Gastrocnemius medialis (tissue), 4 donors: ENCODE measurements at regions of chr5 and their contacts with region 1.

Region 1: DNA sequence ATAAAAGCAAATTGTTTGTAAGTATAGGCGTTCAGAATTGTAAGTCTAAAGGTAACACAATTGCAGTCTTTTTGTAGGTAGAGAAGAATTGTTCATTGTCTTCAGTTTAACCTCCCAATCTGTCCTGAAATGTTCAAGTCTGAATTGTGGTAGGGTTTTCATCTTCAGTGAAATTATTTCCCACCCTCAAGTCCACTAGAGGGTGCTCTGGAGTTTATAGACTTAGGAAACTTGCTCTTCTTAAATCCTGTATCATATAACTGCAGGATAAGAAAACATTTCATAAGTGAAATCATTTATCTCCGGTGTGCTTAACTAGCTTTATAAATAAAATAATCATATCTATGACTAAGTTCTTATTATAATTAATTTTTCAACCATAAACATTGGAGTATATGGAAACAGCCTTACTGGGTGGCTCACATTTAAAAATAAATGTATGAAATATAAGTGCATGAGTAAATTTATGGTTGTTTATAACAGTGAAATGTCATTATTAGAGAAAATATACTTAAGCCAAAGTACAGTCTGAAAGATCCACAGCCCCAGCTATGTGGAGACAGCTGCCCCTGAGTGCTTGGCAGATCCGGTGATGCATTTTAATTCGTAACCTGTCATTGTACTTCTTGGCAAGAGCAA is 182.4 kb upstream of the OTULINL start:
- DNase-seq: no peak
- ATAC-seq: peak; percentile 40 to 73
- H3K4me3 ChIP-seq: no peak overlapping the region
- H3K27ac ChIP-seq: peak overlapping the region in 1 of 4 donors; percentile 26
- H3K4me1 ChIP-seq: peaks cover 0 to 11% of the 10 kb centered on the region in 2 donors
- H3K27me3 ChIP-seq: no peaks in the 10 kb centered on the region
- CTCF ChIP-seq: peak; percentile 39 to 72 (median 48)
- POLR2A ChIP-seq: no peak

Region 2: DNA sequence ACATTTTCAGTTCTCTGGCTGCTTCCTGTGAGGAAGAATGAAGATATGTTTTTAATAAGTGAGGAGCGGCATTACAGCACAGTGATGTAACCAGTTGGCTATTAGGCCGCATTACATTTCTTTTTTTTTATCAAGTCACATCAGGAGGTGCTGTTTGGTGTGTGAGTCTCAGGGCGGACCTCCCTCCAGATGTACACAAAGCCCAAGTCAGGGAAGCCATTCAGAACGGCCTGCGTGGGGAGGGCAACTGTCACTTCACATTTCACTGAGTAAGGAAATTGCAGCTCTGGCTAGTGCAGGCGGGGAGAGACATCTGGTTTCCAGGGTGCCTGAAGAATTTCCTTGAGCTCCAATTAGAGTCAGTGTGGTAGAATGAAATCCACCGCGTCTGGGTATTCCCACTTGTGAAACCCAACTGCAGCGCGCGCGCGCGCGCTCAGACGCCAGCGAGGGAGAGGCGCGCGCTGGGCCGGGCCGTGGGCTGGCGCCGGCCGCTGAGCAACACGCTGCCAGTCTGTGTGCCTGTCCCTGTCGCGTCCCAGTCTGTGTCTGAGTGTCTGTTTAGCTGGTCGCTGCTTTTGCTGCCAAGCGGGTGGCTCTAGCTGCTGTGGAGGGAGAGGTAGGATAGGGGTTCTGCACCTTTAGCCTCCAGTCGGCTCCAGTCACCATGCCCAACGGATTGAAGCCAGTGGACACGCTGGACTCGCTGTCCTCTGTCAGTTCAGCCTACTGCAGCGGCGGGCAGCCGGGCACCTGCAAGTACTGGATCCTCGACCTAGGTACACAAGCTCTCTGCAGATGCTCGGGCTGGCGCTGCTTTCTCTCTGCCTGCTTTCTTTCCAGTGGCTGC is 41.6 kb after region 1 on chr5:
- in situ Hi-C with region 1: no loop called
- intact Hi-C with region 1: loop called (anchors 5 kb)
- DNase-seq: peak; percentile 26 to 63
- ATAC-seq: peak; percentile 72 to 79
- H3K4me3 ChIP-seq: peak overlapping the region; percentile 31 to 55 (median 51)
- H3K27ac ChIP-seq: peak overlapping the region; percentile 49 to 72 (median 69)
- H3K4me1 ChIP-seq: peaks cover 7 to 12% of the 10 kb centered on the region in 2 donors
- H3K27me3 ChIP-seq: no peaks in the 10 kb centered on the region
- CTCF ChIP-seq: no peak
- POLR2A ChIP-seq: peak in 1 of 2 donors; percentile 59

Region 3: GRCh38 chr5:14581333-14581890 is 182.2 kb after region 1 on chr5 and contains the start of gene OTULINL:
- in situ Hi-C with region 1: no loop called
- intact Hi-C with region 1: loop called (anchors 5 kb)
- DNase-seq: peak; percentile 65 to 68
- ATAC-seq: peak; percentile 81 to 90
- H3K4me3 ChIP-seq: peak within 1 kb of the TSS; percentile 63 to 71 (median 68)
- H3K27ac ChIP-seq: no peak within 1 kb of the TSS
- H3K4me1 ChIP-seq: peaks cover 3 to 5% of the 10 kb centered on the region in 2 donors
- H3K27me3 ChIP-seq: peaks cover 15 to 32% (median 20%) of the 10 kb centered on the region in 3 donors
- CTCF ChIP-seq: no peak
- POLR2A ChIP-seq: peak in 1 of 2 donors; percentile 8
- total RNA-seq, gene OTULINL: 0.73 to 1.8 (median 0.96) TPM

Region 4: DNA sequence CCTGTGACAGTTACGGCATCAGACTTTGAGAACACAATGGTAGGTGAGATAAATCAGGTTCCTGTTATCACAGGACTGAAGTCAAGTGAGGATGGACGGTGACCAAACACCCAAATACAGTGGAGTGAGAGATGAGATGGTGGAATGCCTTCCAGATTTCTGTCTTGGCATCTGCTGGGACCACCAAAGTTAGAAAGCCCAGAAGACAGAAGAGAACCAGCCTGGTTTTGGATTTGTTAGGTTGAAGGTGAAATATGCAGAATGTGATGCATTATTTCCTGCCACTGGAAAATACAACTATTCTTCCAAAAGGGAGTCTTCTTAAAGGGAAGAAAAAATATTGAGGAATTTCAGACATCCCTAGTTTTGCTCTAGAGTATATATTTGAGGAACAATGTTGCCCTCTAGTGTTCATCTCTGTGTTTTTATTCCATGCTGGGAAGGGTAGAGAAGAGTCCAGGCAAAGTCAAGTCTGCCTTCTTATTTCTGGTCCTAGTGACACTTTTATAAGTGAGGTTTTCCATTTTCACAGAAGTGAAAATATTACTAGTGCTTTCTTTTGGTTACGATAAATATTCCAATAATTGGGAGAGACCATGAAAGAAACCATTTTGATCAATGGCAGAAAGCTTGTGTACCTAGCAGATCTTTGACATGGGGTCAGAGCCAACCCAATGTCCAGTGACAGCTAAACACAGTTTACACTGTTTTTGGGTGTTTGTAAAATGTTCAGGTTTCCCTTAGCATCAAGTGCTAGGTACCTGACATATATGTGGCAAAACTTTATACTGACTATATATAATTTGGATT is 614.7 kb after region 1 on chr5:
- in situ Hi-C with region 1: loop called in 1 of 4 experiments (anchors 25 kb)
- intact Hi-C with region 1: loop called (anchors 10 kb)
- DNase-seq: no peak
- ATAC-seq: peak; percentile 71 to 81
- H3K4me3 ChIP-seq: no peak overlapping the region
- H3K27ac ChIP-seq: no peak overlapping the region
- H3K4me1 ChIP-seq: peaks cover 3 to 5% of the 10 kb centered on the region in 2 donors
- H3K27me3 ChIP-seq: no peaks in the 10 kb centered on the region
- CTCF ChIP-seq: peak; percentile 42 to 64 (median 59)
- POLR2A ChIP-seq: no peak